ENCODE measurements at regions of chr1 and their contacts with region 1.

Region 1: GRCh38 chr1:24955161-24955560 is 25.1 kb upstream of the RUNX3 start:
- DNase-seq: peak; percentile 90
- H3K4me3 Mint-ChIP-seq: peak overlapping the region; percentile 83
- H3K27ac Mint-ChIP-seq: peak overlapping the region; percentile 89
- H3K4me1 Mint-ChIP-seq: peaks cover 90% of the 10 kb centered on the region
- H3K27me3 Mint-ChIP-seq: no peaks in the 10 kb centered on the region

Region 2: GRCh38 chr1:25022361-25023189 is 67.4 kb after region 1 on chr1:
- CTCF ChIA-PET with region 1: no interaction called
- POLR2A ChIA-PET with region 1: interaction called, 4 read pairs
- intact Hi-C with region 1: loop called (anchors 2 kb)
- DNase-seq: peak; percentile 97
- H3K4me3 Mint-ChIP-seq: peak overlapping the region; percentile 77
- H3K27ac Mint-ChIP-seq: peak overlapping the region; percentile 97
- H3K4me1 Mint-ChIP-seq: peaks cover 84% of the 10 kb centered on the region
- H3K27me3 Mint-ChIP-seq: no peaks in the 10 kb centered on the region

Region 3: DNA sequence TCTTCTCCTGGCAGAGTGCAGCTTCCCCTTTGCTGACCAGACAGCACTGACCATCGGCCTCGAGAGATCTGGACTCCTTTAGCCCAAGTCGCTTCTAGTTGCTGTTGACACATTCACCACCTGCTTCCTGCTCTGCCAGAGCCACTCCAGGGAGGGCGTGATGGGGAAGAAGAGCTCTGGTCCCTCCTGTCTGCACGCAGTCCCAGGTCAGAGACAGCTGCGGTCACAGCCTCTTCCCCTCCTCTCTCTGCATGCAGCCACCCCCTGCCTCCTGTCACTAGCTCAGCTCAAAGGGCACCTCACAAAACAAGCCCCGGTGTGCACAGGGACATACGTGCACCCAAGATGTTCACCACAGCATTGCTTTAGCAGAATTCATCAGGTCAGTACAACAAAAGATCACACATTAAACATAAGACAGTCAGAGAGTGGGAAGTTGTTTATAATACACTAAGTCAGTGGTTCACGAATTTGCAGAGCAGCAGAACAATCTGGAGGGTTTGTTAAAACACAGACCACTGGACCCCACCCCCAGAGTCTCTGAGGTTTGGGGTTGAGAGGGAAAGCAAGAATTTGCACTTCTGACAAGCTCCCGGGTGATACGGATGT is 144.3 kb after region 1 on chr1:
- CTCF ChIA-PET with region 1: no interaction called
- POLR2A ChIA-PET with region 1: no interaction called
- intact Hi-C with region 1: loop called (anchors 10 kb)
- DNase-seq: peak; percentile 59
- H3K4me3 Mint-ChIP-seq: no peak overlapping the region
- H3K27ac Mint-ChIP-seq: no peak overlapping the region
- H3K4me1 Mint-ChIP-seq: peaks cover 50% of the 10 kb centered on the region
- H3K27me3 Mint-ChIP-seq: peaks cover 2% of the 10 kb centered on the region

Measured in activated CD4-positive, alpha-beta memory T cell treated with anti-CD3 and anti-CD28 coated beads for 36 hours (primary cell).